ENCODE measurements at regions of chr6 and their contacts with region 1.

Region 1: DNA sequence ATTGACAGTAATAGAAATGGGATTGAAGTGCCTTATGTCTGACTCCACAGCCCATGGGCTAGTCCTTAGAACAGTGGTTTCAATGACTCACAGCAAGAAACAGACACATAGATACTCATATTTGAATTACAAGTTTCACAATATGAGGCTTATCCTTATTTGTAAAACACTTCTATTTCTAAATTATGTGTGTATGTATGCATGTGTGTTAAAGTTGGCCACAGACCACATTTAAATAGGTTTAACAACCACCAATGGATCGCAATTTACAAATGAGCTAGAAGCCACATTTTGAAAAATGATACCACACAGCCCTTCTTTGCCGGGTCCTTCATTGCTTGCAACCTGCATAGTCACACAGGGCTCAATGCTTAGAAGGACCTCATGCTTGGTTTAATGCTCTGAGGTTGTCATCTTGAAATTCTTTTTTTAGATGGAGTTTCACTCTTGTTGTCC is 157.8 kb upstream of the PREP start:
- DNase-seq: peak; percentile 22
- H3K4me3 Mint-ChIP-seq: no peak overlapping the region
- H3K27ac Mint-ChIP-seq: peak overlapping the region; percentile 26
- H3K4me1 Mint-ChIP-seq: peaks cover 9% of the 10 kb centered on the region
- H3K27me3 Mint-ChIP-seq: peaks cover 10% of the 10 kb centered on the region

Region 2: DNA sequence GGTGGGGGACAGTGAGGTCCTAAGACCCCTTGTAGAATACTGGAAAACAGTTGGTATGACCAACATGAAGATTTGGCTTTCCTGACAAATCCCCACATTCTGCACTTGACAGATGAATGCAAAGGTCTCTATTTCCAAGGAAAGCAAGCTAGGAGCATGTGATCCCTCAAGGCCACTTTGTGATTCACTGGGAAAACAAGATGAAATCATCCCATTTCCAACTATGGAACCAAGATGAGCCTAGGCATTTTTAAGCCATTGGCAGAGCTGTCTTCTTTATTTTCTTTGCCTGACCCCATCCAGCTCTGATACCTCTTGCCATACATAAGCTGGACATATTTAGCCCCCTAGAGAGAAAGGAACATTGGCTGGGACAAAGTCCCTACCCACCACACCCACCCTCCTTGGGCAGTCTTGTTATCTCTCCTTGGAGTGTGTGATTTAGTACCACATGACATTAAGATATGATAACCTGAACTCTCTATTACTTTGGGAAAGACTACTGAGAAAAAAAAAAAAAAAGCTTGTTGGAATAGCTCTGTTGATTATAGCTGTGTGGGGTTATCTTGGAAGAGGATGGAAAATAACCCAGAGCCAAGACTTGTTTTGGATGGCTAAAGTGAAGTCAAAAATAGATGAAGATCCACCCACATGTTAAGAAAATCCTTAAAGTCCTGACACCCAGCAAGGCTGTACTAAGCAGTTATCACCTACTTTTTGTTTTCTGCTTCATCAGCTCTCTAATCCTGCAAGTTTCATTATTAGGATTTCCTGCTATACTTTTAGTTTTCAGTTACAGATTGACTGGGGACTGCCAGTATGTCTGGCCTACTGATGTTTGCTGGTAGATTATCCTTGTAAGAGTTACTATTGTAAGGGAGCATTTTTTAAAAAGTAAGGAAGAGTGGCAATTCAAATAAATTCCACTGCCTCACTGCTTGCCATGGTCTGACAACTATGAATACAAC is 67.6 kb before region 1 on chr6:
- CTCF ChIA-PET with region 1: no interaction called
- POLR2A ChIA-PET with region 1: no interaction called
- intact Hi-C with region 1: loop called (anchors 5 kb)
- DNase-seq: no peak
- H3K4me3 Mint-ChIP-seq: no peak overlapping the region
- H3K27ac Mint-ChIP-seq: peak overlapping the region; percentile 44
- H3K4me1 Mint-ChIP-seq: peaks cover 15% of the 10 kb centered on the region
- H3K27me3 Mint-ChIP-seq: no peaks in the 10 kb centered on the region

Region 3: GRCh38 chr6:105522626-105523322 is 37.9 kb before region 1 on chr6:
- CTCF ChIA-PET with region 1: no interaction called
- POLR2A ChIA-PET with region 1: no interaction called
- intact Hi-C with region 1: loop called (anchors 2 kb)
- DNase-seq: peak; percentile 14
- H3K4me3 Mint-ChIP-seq: no peak overlapping the region
- H3K27ac Mint-ChIP-seq: peak overlapping the region; percentile 30
- H3K4me1 Mint-ChIP-seq: peaks cover 22% of the 10 kb centered on the region
- H3K27me3 Mint-ChIP-seq: peaks cover 2% of the 10 kb centered on the region

Region 4: DNA sequence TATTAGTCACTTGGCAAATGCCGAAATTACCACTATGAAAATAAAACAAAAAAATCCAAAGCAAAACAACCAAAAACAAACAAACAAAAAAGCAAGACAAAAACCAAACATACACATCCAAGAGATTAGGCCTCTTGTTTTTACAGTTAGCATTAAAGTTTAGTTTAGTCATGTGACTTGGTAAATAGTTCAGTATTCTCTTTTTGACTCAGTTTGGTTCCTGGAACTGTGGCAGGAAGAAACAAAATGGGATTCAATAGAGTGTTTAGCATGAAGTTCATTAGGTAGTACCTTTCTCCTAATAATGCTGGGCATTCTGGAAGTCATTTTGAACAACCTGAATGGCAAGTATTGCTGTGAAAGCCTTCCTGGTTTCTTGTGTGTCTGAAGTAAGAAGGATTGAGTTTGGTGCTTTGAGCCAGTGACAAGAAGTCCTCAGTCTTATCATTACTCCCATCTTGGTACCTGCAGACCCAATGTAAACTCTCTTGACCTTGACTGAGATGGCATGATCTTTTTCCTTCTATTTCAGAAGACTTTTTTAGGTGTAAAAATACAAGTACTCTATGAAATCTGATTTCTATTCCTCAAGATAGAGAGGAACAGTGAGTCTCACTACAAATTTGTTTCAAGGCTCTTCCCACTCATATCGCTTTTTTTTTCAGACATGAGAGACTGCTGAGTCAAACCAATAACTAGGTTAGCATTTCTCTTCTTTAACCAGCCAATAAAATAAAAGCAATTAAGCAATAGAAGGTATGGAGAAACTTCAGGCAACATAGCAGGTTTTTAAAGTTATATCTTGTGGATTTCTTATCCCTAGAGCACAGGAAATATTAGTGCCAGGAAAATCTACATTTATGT is 65.9 kb after region 1 on chr6:
- CTCF ChIA-PET with region 1: no interaction called
- POLR2A ChIA-PET with region 1: no interaction called
- intact Hi-C with region 1: loop called (anchors 2 kb)
- DNase-seq: no peak
- H3K4me3 Mint-ChIP-seq: peak overlapping the region; percentile 27
- H3K27ac Mint-ChIP-seq: peak overlapping the region; percentile 81
- H3K4me1 Mint-ChIP-seq: peaks cover 29% of the 10 kb centered on the region
- H3K27me3 Mint-ChIP-seq: peaks cover 13% of the 10 kb centered on the region